ENCODE measurements at regions of chr12 and their contacts with region 1.

Region 1: DNA sequence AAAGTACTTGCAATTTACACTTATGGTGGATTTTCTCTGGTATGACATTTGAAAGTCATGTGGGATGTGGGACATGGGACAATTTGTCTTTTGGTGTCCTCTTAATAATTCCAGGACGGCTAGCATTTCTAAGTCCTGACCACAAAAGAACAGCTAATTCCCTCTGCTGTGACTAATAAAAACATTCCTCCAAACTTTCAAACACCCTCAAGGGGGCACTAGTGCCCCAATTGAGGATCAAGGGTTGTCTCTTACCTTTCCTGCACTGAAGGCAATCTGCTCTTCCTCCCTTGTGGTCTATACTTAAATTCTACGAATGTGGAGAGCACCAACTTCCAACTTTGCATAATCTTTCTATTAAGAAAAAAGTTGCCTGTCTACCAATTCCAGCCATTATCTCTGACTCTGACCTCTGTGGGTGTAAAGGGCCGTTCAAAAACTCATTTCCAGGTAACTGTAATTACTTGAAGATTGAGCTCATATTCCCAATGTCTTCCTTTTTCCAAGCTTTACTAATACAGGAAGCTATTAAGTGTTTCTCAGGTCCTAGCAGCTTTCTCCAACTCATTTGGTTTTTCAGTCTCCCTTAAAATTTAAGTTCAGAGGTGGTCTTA is 210.2 kb downstream of the PTPRO start:
- DNase-seq: peak; percentile 36
- ATAC-seq: peak; percentile 89
- H3K4me3 ChIP-seq: no peak overlapping the region
- H3K27ac ChIP-seq: no peak overlapping the region
- H3K4me1 ChIP-seq: no peaks in the 10 kb centered on the region; the same call in 1 of the 2 replicates
- H3K27me3 ChIP-seq: no peaks in the 10 kb centered on the region; a peak in 1 of 4 replicates
- CTCF ChIP-seq: peak; percentile 57 to 89 (median 62)
- EP300 ChIP-seq: no peak
- POLR2A ChIP-seq: no peak
- RAD21 ChIP-seq: peak; percentile 98

Region 2: GRCh38 chr12:15276088-15276698 is 256.3 kb before region 1 on chr12:
- CTCF ChIA-PET with region 1: interaction called, 81 read pairs
- POLR2A ChIA-PET with region 1: no interaction called
- RAD21 ChIA-PET with region 1: interaction called, 5 read pairs
- SMC1A ChIA-PET with region 1: interaction called, 37 read pairs
- in situ Hi-C with region 1: no loop called
- intact Hi-C with region 1: no loop called
- DNase-seq: no peak
- ATAC-seq: peak; percentile 29
- H3K4me3 ChIP-seq: no peak overlapping the region
- H3K27ac ChIP-seq: no peak overlapping the region
- H3K4me1 ChIP-seq: no peaks in the 10 kb centered on the region
- H3K27me3 ChIP-seq: no peaks in the 10 kb centered on the region
- CTCF ChIP-seq: peak; percentile 52 to 69 (median 57); a peak in 5 of 6 replicates
- EP300 ChIP-seq: no peak
- POLR2A ChIP-seq: no peak
- RAD21 ChIP-seq: peak; percentile 54

Region 3: DNA sequence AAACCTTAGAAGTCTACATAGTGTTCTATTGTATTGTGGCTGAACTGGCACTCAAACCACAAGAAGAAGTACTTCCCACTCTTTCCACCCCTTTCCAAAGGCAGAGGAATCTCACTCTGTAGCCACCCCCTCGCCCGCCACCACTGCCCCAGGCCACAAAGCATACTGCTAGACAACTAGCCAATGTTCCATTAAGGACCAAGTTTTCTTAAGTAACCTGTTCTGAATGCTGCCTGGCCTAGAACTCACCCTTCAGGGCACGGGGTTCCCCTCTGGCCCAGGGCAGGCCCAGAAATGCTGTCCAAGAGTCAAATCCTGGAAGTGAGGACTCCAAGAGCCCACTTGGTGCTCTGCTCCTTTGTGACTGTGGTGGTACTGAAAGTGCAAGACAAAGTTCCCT is 225.9 kb before region 1 on chr12:
- CTCF ChIA-PET with region 1: no interaction called
- POLR2A ChIA-PET with region 1: no interaction called
- RAD21 ChIA-PET with region 1: no interaction called
- SMC1A ChIA-PET with region 1: no interaction called
- in situ Hi-C with region 1: no loop called
- intact Hi-C with region 1: no loop called
- DNase-seq: no peak
- ATAC-seq: no peak
- H3K4me3 ChIP-seq: no peak overlapping the region
- H3K27ac ChIP-seq: no peak overlapping the region
- H3K4me1 ChIP-seq: no peaks in the 10 kb centered on the region
- H3K27me3 ChIP-seq: no peaks in the 10 kb centered on the region
- CTCF ChIP-seq: no peak
- EP300 ChIP-seq: no peak
- POLR2A ChIP-seq: no peak
- RAD21 ChIP-seq: no peak

Region 4: GRCh38 chr12:15563663-15564062 is 31.2 kb after region 1 on chr12:
- CTCF ChIA-PET with region 1: interaction called, 185 read pairs
- POLR2A ChIA-PET with region 1: interaction called, 5 read pairs
- RAD21 ChIA-PET with region 1: interaction called, 35 read pairs
- SMC1A ChIA-PET with region 1: interaction called, 177 read pairs
- in situ Hi-C with region 1: no loop called
- intact Hi-C with region 1: no loop called
- DNase-seq: no peak
- ATAC-seq: no peak
- H3K4me3 ChIP-seq: no peak overlapping the region
- H3K27ac ChIP-seq: no peak overlapping the region
- H3K4me1 ChIP-seq: no peaks in the 10 kb centered on the region
- H3K27me3 ChIP-seq: no peaks in the 10 kb centered on the region
- CTCF ChIP-seq: no peak
- EP300 ChIP-seq: no peak
- POLR2A ChIP-seq: no peak
- RAD21 ChIP-seq: no peak

Region 5: DNA sequence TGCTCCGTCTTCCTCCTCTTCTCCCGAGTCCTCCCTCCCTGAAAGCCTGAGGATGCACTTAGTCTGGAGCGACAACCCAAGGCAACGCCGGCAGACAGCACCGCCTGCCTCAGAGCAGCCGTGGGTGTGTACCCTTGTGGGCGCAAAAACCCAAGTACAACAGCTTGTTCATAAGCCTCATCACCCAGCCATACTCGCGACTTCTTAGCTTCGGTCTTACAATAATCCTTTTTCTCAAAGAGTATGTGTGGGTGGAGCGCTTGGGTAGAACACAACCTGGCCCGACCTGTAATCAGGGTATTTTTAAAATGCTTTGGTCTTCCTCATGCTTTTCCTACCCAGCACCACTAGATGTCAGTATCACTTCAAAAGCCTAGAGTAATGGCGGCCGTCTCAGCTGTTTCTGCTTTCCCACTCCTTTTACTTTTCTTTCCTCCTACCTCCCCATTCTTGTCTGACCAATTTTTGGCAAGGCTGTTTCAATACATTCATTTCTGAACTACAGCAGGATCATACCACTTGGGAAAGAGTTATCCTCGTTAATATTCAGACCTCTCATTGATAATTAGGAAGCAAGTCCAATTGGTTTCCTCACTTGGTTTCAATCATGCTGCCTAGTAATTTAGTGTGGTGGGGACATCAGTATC is 57.8 kb after region 1 on chr12:
- CTCF ChIA-PET with region 1: interaction called, 1,078 read pairs
- POLR2A ChIA-PET with region 1: interaction called, 10 read pairs
- RAD21 ChIA-PET with region 1: interaction called, 609 read pairs
- SMC1A ChIA-PET with region 1: interaction called, 853 read pairs
- in situ Hi-C with region 1: no loop called
- intact Hi-C with region 1: no loop called
- DNase-seq: peak; percentile 46
- ATAC-seq: peak; percentile 97
- H3K4me3 ChIP-seq: peak overlapping the region; percentile 46; the same call in 1 of the 2 replicates
- H3K27ac ChIP-seq: no peak overlapping the region
- H3K4me1 ChIP-seq: peaks cover 4% of the 10 kb centered on the region; the same call in 1 of the 2 replicates
- H3K27me3 ChIP-seq: 0 out of 4 replicates have a peak, but pooled peaks cover 0 to 1% of the 10 kb centered on the region in 2 experiments
- CTCF ChIP-seq: peak; percentile 85 to 94 (median 86); a peak in 5 of 6 replicates
- EP300 ChIP-seq: no peak
- POLR2A ChIP-seq: no peak
- RAD21 ChIP-seq: peak; percentile 97

Region 6: DNA sequence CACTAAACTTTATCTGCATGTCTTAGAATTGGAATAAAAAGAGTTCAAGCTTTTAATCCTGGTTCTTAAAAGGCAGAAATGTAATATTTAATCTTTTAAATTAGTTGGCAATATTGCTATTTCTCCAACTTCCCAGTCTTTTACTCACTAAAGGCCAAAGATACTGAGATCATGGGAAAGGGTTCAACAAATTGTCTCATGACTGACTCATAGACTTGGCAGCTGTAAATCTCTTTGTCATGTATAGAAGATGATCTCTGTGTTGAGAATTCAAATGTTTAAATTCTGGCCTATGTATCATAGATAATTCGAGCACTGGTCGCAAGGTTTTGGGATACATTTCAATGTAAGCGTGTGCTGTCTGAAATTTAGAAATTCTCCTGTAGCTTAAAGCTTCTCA is 309.6 kb after region 1 on chr12:
- CTCF ChIA-PET with region 1: interaction called, 22 read pairs
- POLR2A ChIA-PET with region 1: no interaction called
- RAD21 ChIA-PET with region 1: interaction called, 3 read pairs
- SMC1A ChIA-PET with region 1: interaction called, 3 read pairs
- in situ Hi-C with region 1: no loop called
- intact Hi-C with region 1: no loop called
- DNase-seq: no peak
- ATAC-seq: no peak
- H3K4me3 ChIP-seq: no peak overlapping the region
- H3K27ac ChIP-seq: no peak overlapping the region
- H3K4me1 ChIP-seq: no peaks in the 10 kb centered on the region
- H3K27me3 ChIP-seq: no peaks in the 10 kb centered on the region; a peak in 1 of 4 replicates
- CTCF ChIP-seq: no peak
- EP300 ChIP-seq: no peak
- POLR2A ChIP-seq: no peak
- RAD21 ChIP-seq: no peak

Region 7: DNA sequence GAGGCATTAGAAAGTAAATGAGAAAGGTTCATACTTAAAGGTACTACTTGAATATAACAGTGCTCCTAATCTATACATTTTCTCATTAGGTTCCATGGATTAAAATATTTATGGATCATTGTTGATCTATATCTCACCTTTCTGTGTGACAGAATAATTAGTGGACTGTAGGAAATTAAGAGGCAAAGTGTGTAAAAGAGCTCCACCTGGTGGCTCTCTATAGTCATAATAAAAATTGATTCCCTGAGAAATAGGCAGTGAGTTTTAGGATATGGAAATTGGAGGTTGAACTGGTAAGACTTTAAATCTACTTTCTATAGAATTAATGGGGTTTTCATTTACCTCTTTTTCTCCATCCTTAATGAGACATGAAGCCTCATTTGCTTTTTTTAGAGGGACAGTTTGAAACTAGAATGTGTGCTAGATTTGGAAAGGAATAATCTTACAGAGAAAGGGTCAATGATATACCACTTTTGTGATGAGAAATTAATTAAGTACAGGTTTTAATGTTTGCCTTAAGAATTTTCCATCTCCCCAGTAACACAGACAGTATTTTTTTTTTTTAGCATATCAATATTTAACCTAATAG is 366.9 kb after region 1 on chr12:
- CTCF ChIA-PET with region 1: interaction called, 18 read pairs
- POLR2A ChIA-PET with region 1: no interaction called
- RAD21 ChIA-PET with region 1: interaction called, 4 read pairs
- SMC1A ChIA-PET with region 1: interaction called, 6 read pairs
- in situ Hi-C with region 1: no loop called
- intact Hi-C with region 1: no loop called
- DNase-seq: no peak
- ATAC-seq: peak; percentile 76
- H3K4me3 ChIP-seq: no peak overlapping the region
- H3K27ac ChIP-seq: no peak overlapping the region
- H3K4me1 ChIP-seq: no peaks in the 10 kb centered on the region
- H3K27me3 ChIP-seq: no peaks in the 10 kb centered on the region
- CTCF ChIP-seq: peak; percentile 43 to 64 (median 57)
- EP300 ChIP-seq: no peak
- POLR2A ChIP-seq: no peak
- RAD21 ChIP-seq: peak; percentile 66

Region 8: GRCh38 chr12:16833376-16834015 is 1301.0 kb after region 1 on chr12:
- CTCF ChIA-PET with region 1: no interaction called
- POLR2A ChIA-PET with region 1: no interaction called
- RAD21 ChIA-PET with region 1: no interaction called
- SMC1A ChIA-PET with region 1: no interaction called
- in situ Hi-C with region 1: no loop called
- intact Hi-C with region 1: no loop called
- DNase-seq: peak; percentile 33
- ATAC-seq: peak; percentile 82
- H3K4me3 ChIP-seq: no peak overlapping the region
- H3K27ac ChIP-seq: no peak overlapping the region
- H3K4me1 ChIP-seq: no peaks in the 10 kb centered on the region
- H3K27me3 ChIP-seq: no peaks in the 10 kb centered on the region
- CTCF ChIP-seq: no peak
- EP300 ChIP-seq: peak; percentile 18 to 48; a peak in 2 of 4 replicates
- POLR2A ChIP-seq: no peak
- RAD21 ChIP-seq: no peak